ENCODE measurements at regions of chr17 and their contacts with region 1.

Region 1: DNA sequence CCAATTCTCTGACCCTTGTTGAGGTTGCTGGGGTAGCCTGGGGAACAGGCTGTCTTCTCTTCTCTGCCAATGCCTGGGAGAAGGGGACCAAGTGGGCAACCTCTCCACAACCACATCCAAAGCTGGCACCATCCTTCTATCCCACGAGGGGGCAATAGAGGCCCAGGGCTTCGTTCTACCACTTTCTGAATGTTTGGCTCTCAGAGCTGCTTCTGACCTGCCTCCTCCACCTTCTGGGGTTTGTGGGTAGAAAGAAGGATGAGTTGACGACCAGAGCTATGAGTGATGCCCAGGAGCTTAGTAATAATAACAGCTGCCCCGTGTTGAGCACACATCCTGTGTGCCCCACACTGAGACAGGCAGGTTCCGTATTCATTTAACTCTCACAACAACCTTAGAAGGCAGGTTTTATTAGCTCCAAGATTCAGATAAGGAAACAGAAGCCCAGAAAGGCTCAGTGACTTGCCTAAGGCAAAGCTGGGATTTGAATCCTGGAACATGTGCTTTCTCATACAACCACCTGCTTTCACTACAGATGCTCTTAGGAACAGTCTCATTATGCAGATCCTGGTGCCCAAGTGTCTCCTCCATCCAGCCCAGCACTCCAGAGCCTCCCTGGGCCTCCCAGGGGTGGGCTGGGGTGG is 11.1 kb downstream of the TSPOAP1 start:
- DNase-seq: peak; percentile 68
- ATAC-seq: peak; percentile 92
- H3K4me3 Mint-ChIP-seq: no peak overlapping the region
- H3K27ac Mint-ChIP-seq: no peak overlapping the region
- H3K4me1 Mint-ChIP-seq: peaks cover 3% of the 10 kb centered on the region
- H3K27me3 Mint-ChIP-seq: peaks cover 23% of the 10 kb centered on the region
- CTCF ChIP-seq: peak; percentile 49; the same call in 1 of the 2 replicates

Region 2: DNA sequence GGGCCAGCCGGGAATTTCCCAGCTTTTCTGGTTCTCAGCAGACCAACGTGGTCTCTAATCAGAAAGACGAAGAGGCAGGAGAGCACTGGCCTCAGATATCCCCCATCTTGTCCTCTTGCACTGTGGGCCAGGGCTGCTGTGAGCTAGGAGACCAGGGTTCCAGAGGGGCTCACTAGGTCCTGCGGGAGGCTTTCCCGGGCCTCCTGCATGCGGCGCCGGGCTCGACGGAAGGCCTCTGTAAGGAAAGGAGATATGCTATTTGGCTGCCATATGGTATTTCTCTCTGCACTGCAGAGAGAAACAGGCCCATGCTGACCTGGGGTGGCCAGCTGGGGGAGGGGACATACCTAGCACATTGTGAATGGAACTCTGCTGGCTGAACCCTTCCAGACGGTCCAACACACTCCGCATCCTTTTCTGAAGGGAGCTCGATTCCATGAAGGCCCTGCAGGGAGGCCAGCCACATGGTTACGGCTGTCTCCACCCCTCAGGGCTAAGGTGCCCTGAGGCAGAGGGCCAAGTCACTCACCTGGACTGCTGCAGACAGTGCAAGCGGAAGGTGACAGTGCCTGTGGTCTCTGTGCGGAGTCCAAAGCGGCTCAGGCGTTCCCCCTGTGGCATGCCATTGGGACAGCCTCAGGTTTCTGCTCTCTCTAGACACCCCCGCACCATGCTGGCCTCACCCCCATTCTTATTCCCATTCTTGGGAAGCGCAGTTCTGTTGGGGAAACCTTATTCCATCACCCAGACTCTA is 111.4 kb before region 1 on chr17:
- CTCF ChIA-PET with region 1: no interaction called
- POLR2A ChIA-PET with region 1: no interaction called
- DNase-seq: no peak
- ATAC-seq: no peak
- H3K4me3 Mint-ChIP-seq: no peak overlapping the region
- H3K27ac Mint-ChIP-seq: no peak overlapping the region
- H3K4me1 Mint-ChIP-seq: no peaks in the 10 kb centered on the region
- H3K27me3 Mint-ChIP-seq: no peaks in the 10 kb centered on the region
- CTCF ChIP-seq: no peak

Region 3: DNA sequence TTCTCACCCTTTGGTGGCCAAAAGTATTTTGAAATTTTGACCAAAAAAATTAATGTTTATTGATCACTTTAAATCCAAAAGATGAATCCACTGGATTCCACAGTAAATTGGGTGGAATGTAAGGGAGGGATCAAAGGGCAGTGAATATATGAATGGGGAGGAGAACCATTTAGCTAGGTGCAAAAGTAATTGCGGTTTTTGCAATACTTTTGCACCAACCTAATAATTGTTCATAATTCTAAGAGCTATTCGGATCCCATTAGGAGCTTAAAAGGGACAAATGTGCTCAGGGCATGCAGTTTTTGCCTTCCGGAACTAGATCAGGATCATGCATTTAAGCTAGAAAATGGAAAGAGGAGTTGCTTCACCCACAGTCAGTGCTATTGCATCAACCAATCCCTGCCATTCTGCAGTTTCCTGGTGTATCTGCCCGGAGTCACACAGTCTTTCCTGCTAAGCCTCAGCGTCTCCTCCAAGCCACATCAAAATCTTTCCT is 79.4 kb before region 1 on chr17 and contains the start of gene LPO:
- CTCF ChIA-PET with region 1: no interaction called
- POLR2A ChIA-PET with region 1: no interaction called
- DNase-seq: no peak
- ATAC-seq: no peak
- H3K4me3 Mint-ChIP-seq: no peak within 1 kb of the TSS
- H3K27ac Mint-ChIP-seq: no peak within 1 kb of the TSS
- H3K4me1 Mint-ChIP-seq: no peaks in the 10 kb centered on the region
- H3K27me3 Mint-ChIP-seq: peaks cover 82% of the 10 kb centered on the region
- CTCF ChIP-seq: no peak
- total RNA-seq, gene LPO: 0.20 to 0.50 TPM (median 0.23 TPM) in 3 replicates

Region 4: DNA sequence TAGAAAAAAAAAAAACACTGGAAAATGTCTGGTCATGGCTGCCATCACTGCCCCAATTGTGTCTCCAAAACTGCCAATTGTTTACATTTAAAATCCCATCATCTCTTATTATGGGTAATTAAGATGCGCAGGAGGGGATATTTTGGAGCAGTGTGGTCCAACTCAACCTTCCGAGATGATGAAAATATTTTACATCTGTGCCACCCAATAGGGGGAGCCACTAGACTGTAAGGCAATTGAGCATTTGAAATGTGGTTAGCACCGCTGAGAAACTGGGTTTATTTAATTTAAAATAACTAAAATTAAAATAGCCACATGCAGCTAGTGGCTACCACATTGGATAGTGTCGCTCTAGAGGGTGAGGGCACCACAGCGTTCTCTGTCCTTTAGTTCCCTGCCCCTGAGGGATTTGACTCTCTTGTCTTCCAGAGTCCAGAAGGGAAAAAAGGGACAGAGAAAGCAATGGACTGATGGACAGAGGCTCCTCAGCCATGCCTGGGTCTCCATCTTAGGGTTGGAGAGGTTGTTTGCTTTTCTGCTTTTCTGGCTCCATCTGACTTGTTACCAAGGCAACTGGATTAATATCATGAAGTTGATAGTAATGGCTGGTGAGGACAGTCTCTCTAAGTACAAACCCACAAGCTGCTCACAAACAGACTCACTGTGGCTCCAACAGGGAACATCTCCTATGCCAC is 40.3 kb before region 1 on chr17:
- CTCF ChIA-PET with region 1: interaction called, 11 read pairs
- POLR2A ChIA-PET with region 1: no interaction called
- DNase-seq: no peak
- ATAC-seq: peak; percentile 48
- H3K4me3 Mint-ChIP-seq: no peak overlapping the region
- H3K27ac Mint-ChIP-seq: no peak overlapping the region
- H3K4me1 Mint-ChIP-seq: no peaks in the 10 kb centered on the region
- H3K27me3 Mint-ChIP-seq: peaks cover 16% of the 10 kb centered on the region
- CTCF ChIP-seq: peak; percentile 31; the same call in 1 of the 2 replicates

Region 5: GRCh38 chr17:58303971-58304725 is 13.4 kb before region 1 on chr17:
- CTCF ChIA-PET with region 1: interaction called, 97 read pairs
- POLR2A ChIA-PET with region 1: no interaction called
- DNase-seq: peak; percentile 74
- ATAC-seq: peak; percentile 76
- H3K4me3 Mint-ChIP-seq: no peak overlapping the region
- H3K27ac Mint-ChIP-seq: no peak overlapping the region
- H3K4me1 Mint-ChIP-seq: peaks cover 11% of the 10 kb centered on the region
- H3K27me3 Mint-ChIP-seq: no peaks in the 10 kb centered on the region; the same call in 1 of the 2 replicates
- CTCF ChIP-seq: peak; percentile 94

Region 6: GRCh38 chr17:58337600-58338453 is 20.3 kb after region 1 on chr17:
- CTCF ChIA-PET with region 1: interaction called, 22 read pairs
- POLR2A ChIA-PET with region 1: interaction called, 4 read pairs
- DNase-seq: peak; percentile 84
- ATAC-seq: peak; percentile 84
- H3K4me3 Mint-ChIP-seq: 0 out of 2 replicates have a peak overlapping the region, but pooled peaks have one; percentile 14
- H3K27ac Mint-ChIP-seq: peak overlapping the region; percentile 88
- H3K4me1 Mint-ChIP-seq: peaks cover 45% of the 10 kb centered on the region
- H3K27me3 Mint-ChIP-seq: no peaks in the 10 kb centered on the region; the same call in 1 of the 2 replicates
- CTCF ChIP-seq: no peak

Region 7: GRCh38 chr17:58352014-58352842 is 34.7 kb after region 1 on chr17 and contains the start of gene SUPT4H1:
- CTCF ChIA-PET with region 1: interaction called, 54 read pairs
- POLR2A ChIA-PET with region 1: interaction called, 9 read pairs
- DNase-seq: peak; percentile 89
- ATAC-seq: peak; percentile 88
- H3K4me3 Mint-ChIP-seq: peak within 1 kb of the TSS; percentile 100
- H3K27ac Mint-ChIP-seq: peak within 1 kb of the TSS; percentile 99
- H3K4me1 Mint-ChIP-seq: peaks cover 19% of the 10 kb centered on the region
- H3K27me3 Mint-ChIP-seq: no peaks in the 10 kb centered on the region; the same call in 1 of the 2 replicates
- CTCF ChIP-seq: no peak
- total RNA-seq, gene SUPT4H1: 85.5 to 91.1 TPM (median 89.3 TPM) in 3 replicates

Region 8: GRCh38 chr17:58432806-58433572 is 115.4 kb after region 1 on chr17:
- CTCF ChIA-PET with region 1: interaction called, 12 read pairs
- POLR2A ChIA-PET with region 1: interaction called, 3 read pairs
- DNase-seq: no peak
- ATAC-seq: no peak
- H3K4me3 Mint-ChIP-seq: no peak overlapping the region
- H3K27ac Mint-ChIP-seq: no peak overlapping the region
- H3K4me1 Mint-ChIP-seq: no peaks in the 10 kb centered on the region
- H3K27me3 Mint-ChIP-seq: no peaks in the 10 kb centered on the region; the same call in 1 of the 2 replicates
- CTCF ChIP-seq: no peak

Region 9: DNA sequence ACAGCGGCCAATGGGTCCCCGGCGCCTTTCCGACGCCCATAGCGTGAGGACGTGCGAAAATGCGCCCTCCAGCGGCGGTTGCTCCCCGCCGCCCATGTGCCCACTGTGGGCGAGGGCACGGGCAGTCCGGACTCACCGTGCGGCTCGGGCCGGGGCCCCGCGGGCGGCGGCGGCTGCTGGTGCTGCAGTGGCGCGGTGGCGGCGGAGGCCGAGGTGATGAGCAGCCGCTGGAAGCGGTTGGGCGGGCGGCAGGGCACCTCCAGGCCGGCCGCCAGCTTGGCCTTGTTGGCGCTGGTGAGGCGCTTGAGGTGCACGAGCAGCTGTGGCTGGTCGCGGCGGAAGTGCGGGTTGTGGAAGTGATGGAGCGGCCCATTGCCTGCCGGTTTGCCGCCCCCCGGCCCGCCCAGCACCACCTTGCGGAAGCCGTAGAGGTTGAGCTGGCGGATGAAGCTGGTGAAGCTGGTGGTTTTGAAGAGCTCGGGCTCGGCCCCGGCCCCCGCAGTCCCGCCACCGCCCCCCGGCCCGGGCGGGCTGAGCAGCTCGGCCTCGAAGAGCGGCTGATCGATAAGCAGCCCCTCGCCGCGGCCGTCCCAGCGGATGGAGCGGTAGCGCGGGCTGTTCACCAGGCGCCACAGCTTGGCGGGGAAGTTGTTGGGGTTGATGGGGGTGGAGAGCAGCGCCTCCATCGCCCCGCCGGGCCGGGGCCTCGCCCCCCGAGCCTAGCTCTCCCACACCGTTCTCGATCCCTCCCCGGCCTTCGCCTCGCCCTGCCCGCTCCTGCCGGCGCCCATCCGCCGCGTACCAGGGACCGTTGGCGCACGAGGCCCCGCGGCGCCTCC is 170.3 kb after region 1 on chr17 and contains the start of gene HSF5:
- CTCF ChIA-PET with region 1: interaction called, 10 read pairs
- POLR2A ChIA-PET with region 1: no interaction called
- DNase-seq: peak; percentile 78
- ATAC-seq: peak; percentile 89
- H3K4me3 Mint-ChIP-seq: no peak within 1 kb of the TSS
- H3K27ac Mint-ChIP-seq: no peak within 1 kb of the TSS
- H3K4me1 Mint-ChIP-seq: no peaks in the 10 kb centered on the region
- H3K27me3 Mint-ChIP-seq: peaks cover 21% of the 10 kb centered on the region
- CTCF ChIP-seq: peak; percentile 47
- total RNA-seq, gene HSF5: 0.07 to 0.11 TPM (median 0.09 TPM) in 3 replicates

Measured in WTC11 (cell line).